Activated CD8-positive, alpha-beta T cell treated with anti-CD3 and anti-CD28 coated beads for 36 hours (primary cell): ENCODE measurements at regions of chr3 and their contacts with region 1.

Region 1: DNA sequence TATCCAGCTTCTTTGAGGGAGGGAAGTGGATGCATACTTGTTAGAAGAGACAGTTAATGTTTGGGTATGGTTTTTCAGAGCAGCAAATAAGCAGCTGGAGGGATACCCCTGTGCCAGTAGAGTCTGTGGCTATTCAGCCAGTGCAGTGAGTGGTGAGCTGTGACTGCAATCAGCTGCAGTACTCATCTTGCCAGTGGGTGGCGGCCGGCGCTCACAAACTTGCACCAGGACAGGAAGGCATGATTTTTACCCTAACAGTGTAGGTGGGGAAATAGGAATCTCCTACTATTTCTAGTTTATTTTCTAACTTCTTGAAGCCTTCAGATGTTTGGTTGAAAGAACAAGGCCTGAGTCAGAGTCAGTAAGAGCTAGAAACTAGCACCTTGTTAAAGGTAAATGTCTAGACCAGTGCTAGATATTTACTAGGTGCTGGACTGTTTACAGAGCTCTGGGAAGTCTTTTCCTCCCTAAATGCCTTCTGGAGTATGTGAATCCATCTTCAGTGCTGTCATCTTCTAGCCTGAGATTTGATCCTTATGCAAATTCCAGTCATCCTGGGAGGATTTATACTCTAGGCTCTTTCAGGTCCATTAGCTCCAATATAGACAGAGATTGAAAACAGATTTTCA is 23.6 kb downstream of the TIMP4 start:
- DNase-seq: peak; percentile 80
- ATAC-seq: peak; percentile 86
- H3K4me3 Mint-ChIP-seq: no peak overlapping the region
- H3K27ac Mint-ChIP-seq: no peak overlapping the region
- H3K4me1 Mint-ChIP-seq: peaks cover 3% of the 10 kb centered on the region
- H3K27me3 Mint-ChIP-seq: peaks cover 11% of the 10 kb centered on the region
- CTCF ChIP-seq: peak; percentile 81

Region 2: DNA sequence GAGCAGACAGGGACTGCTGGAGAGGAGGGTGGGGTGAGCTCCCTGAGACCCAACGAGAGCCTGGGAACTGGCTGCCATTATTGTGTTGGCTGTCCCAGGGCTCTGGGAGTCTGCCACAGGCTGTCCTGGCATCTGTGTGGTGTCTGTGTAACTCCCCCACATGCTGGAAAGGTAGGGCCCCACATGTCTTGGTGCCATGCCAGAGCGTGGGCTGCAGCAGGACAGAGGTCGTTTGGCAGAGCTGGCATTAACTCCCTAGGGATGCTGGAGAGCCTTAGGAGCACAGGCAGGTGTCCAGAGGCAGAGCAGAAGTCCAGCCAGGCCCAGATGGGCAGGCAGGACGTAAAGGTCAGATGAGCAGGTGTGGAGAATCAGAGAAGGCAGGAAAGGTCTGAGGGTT is 13.9 kb after region 1 on chr3:
- CTCF ChIA-PET with region 1: interaction called, 21 read pairs
- POLR2A ChIA-PET with region 1: no interaction called
- intact Hi-C with region 1: no loop called
- DNase-seq: no peak
- ATAC-seq: no peak
- H3K4me3 Mint-ChIP-seq: no peak overlapping the region
- H3K27ac Mint-ChIP-seq: no peak overlapping the region
- H3K4me1 Mint-ChIP-seq: no peaks in the 10 kb centered on the region
- H3K27me3 Mint-ChIP-seq: peaks cover 7% of the 10 kb centered on the region
- CTCF ChIP-seq: no peak

Region 3: DNA sequence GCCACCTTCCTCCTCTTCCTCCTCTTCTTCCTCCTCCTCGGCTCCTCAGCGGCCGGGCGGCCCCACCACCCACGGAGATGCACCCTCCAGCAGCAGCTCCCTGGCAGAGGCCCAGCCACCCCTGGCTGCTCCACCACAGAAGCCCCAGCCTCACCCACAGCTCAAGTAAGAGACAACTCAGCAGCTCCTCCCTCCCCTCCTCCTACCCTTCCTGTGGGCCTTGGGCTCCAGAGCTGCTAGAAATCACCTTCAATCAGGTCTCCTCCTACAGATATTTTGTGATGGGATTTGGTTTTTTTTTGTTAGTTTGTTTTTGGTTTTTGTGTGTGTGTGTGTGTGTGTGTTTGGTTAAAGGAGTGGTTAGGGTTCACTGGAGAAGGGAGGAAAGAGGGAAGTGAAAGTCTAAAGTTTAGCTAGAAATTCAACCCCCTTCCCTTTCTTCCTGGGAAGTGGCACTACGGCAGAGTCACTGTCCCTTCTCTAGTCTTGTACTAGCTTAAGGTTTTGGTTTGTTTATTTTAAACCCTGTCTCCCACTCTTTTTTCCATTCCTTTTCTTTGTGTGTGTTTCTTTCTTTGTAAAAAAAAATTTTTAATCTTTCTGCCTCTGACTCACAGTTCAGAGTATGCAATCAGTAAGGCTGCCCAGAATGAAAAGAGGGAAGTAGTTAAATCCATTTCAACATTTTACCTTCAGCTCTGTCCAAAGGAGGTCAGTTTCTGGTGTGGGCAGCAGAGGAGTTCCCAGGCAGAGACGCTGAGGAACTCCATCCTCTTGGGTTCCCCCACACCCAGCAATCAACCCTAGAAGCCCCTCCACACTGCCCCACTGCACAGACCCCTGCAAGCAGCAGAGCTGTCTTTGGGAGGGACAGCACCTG is 52.5 kb after region 1 on chr3:
- CTCF ChIA-PET with region 1: interaction called, 14 read pairs
- POLR2A ChIA-PET with region 1: no interaction called
- intact Hi-C with region 1: no loop called
- DNase-seq: peak; percentile 94
- ATAC-seq: peak; percentile 95
- H3K4me3 Mint-ChIP-seq: peak overlapping the region; percentile 58
- H3K27ac Mint-ChIP-seq: peak overlapping the region; percentile 94
- H3K4me1 Mint-ChIP-seq: peaks cover 55% of the 10 kb centered on the region
- H3K27me3 Mint-ChIP-seq: no peaks in the 10 kb centered on the region
- CTCF ChIP-seq: no peak

Region 4: GRCh38 chr3:12287727-12288191 is 152.6 kb after region 1 on chr3:
- CTCF ChIA-PET with region 1: no interaction called
- POLR2A ChIA-PET with region 1: no interaction called
- intact Hi-C with region 1: no loop called
- DNase-seq: peak; percentile 12
- ATAC-seq: peak; percentile 57
- H3K4me3 Mint-ChIP-seq: peak overlapping the region; percentile 54
- H3K27ac Mint-ChIP-seq: no peak overlapping the region
- H3K4me1 Mint-ChIP-seq: peaks cover 9% of the 10 kb centered on the region
- H3K27me3 Mint-ChIP-seq: peaks cover 53% of the 10 kb centered on the region
- CTCF ChIP-seq: no peak

Region 5: DNA sequence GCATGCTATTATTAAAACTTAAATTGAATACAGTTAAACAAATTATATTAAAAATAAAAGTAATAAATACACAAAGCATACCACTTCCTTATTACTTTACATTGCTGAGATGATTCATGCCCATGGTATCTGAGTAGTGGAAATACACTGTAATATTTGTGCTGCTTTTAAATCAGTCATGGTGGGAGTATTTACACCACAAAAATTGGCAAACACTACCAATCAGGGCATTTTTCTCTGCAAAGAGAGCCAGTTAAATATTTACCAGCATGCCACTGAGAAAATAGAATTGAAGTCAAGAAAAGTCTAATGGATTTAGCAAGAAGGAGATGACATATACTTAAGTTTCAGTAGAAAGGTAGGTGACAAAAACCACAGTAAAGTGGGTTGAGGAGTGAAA is 173.4 kb after region 1 on chr3:
- CTCF ChIA-PET with region 1: no interaction called
- POLR2A ChIA-PET with region 1: no interaction called
- intact Hi-C with region 1: loop called (anchors 10 kb)
- DNase-seq: no peak
- ATAC-seq: peak; percentile 49
- H3K4me3 Mint-ChIP-seq: no peak overlapping the region
- H3K27ac Mint-ChIP-seq: no peak overlapping the region
- H3K4me1 Mint-ChIP-seq: peaks cover 13% of the 10 kb centered on the region
- H3K27me3 Mint-ChIP-seq: peaks cover 15% of the 10 kb centered on the region
- CTCF ChIP-seq: no peak